Heart left ventricle (tissue), 16 donors: ENCODE measurements at regions of chr1 and their contacts with region 1.

Region 1: DNA sequence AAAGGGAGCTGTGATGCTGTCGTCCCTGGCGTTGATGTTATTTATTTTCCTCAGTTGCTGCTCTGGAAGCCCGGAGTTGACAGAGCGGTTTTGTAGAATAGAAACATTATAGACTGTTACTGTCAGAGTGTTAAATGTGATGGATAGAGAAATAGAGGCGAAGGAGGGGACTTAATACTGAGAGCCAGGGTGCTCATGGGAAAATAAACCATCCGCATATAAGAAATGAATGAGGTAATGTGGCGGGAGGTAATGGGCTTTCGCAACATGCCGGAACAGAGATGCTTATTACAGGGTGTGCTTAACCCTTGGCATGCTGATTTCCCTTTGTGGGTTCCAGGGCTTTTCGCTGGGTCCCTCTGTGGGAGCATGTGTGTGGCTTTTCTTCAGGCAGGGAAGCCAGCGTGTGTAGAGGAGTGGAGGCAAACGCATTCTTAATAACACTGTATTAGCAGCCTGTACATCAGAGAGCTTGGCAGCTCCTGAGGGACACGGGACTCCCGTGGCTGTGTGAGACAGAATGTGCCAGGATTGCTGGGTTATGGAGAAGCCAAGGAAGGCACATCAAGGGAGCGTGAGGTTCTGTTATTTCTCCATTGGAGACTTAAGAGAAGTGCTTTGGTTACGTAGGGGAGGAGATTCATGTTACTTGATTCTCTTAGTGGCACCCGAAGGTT is 141.0 kb downstream of the PBX1 start:
- DNase-seq: peak in 1 of 5 donors; percentile 49
- ATAC-seq: peak; percentile 78 to 88 (median 86)
- H3K4me3 ChIP-seq: no peak overlapping the region
- H3K27ac ChIP-seq: peak overlapping the region in 8 of 12 donors; percentile 4 to 81 (median 45)
- H3K4me1 ChIP-seq: peaks cover 0 to 61% (median 23%) of the 10 kb centered on the region in 12 donors
- H3K27me3 ChIP-seq: no peaks in the 10 kb centered on the region
- CTCF ChIP-seq: no peak
- POLR2A ChIP-seq: no peak

Region 2: DNA sequence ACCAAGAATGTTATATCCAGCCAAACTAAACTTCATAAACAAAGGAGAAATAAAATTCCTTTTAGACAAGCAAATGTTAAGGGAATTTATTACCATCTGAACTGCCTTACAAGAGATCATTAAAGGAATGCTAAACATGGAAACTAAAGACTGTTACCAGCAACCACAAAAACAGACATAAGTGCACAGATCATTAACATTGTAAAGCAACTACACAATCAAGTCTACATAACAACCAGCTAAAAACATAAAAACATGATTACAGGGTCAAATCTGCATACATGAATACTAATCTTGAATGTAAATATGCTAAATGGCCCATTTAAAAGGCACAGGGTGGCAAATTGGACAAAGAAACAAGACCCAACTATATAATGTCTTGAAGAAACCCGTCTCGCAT is 352.0 kb before region 1 on chr1:
- intact Hi-C with region 1: no loop called
- DNase-seq: no peak
- ATAC-seq: no peak
- H3K4me3 ChIP-seq: no peak overlapping the region
- H3K27ac ChIP-seq: no peak overlapping the region
- H3K4me1 ChIP-seq: no peaks in the 10 kb centered on the region
- H3K27me3 ChIP-seq: no peaks in the 10 kb centered on the region
- CTCF ChIP-seq: no peak
- POLR2A ChIP-seq: no peak

Region 3: DNA sequence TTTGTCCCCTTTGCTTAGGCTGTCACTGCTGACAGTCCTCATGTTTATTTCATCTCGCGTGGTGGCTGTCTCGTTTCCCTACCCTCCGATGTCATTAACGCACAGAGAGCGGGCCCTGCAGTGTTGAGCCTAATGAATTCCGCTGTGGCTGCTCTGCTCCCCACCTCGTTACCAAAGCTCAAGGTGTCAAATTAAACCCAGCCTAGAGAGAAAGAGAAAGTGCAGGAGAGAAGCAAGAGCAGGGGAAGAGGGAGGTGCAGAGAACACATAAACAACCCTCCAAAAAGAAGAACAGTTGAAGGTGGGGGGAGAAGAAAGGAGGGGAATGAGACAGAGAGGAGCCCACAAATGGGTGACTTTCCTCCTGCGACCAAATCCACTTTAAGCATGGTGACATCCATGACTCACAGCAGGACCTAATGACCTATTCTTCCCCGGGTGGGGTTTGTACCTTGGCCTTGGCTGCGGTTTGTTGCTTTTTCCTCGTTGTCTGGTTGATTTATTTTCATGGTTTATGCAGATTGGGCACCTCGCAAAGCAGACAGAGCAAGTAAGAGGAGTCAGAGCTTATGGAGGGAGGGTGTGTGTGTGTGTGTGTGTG is 48.5 kb before region 1 on chr1:
- intact Hi-C with region 1: loop called in 2 of 10 experiments (anchors 5 kb)
- DNase-seq: no peak
- ATAC-seq: peak in 3 of 4 donors; percentile 16 to 44 (median 35)
- H3K4me3 ChIP-seq: no peak overlapping the region
- H3K27ac ChIP-seq: peak overlapping the region in 1 of 12 donors; percentile 45
- H3K4me1 ChIP-seq: peaks cover 0 to 53% (median 27%) of the 10 kb centered on the region in 12 donors
- H3K27me3 ChIP-seq: no peaks in the 10 kb centered on the region
- CTCF ChIP-seq: no peak
- POLR2A ChIP-seq: no peak

Region 4: GRCh38 chr1:164813776-164814175 is 113.8 kb after region 1 on chr1:
- intact Hi-C with region 1: no loop called
- DNase-seq: no peak
- ATAC-seq: no peak
- H3K4me3 ChIP-seq: no peak overlapping the region
- H3K27ac ChIP-seq: no peak overlapping the region
- H3K4me1 ChIP-seq: peaks cover 0 to 8% (median 0%) of the 10 kb centered on the region in 12 donors
- H3K27me3 ChIP-seq: no peaks in the 10 kb centered on the region
- CTCF ChIP-seq: no peak
- POLR2A ChIP-seq: no peak